ENCODE measurements at regions of chr17 and their contacts with region 1.

Region 1: GRCh38 chr17:75515496-75516254 is at the start of gene CASKIN2:
- DNase-seq: peak; percentile 67 to 86 (median 79)
- ATAC-seq: peak; percentile 53 to 55
- H3K4me3 Mint-ChIP-seq: peak within 1 kb of the TSS; percentile 70 to 90 (median 78)
- H3K27ac Mint-ChIP-seq: peak within 1 kb of the TSS in 8 of 10 donors; percentile 8 to 80 (median 44)
- H3K4me1 Mint-ChIP-seq: peaks cover 13 to 30% (median 26%) of the 10 kb centered on the region in 4 donors
- H3K27me3 Mint-ChIP-seq: no peaks in the 10 kb centered on the region
- polyA plus RNA-seq, gene CASKIN2: 0.05 to 0.62 (median 0.61) TPM

Region 2: DNA sequence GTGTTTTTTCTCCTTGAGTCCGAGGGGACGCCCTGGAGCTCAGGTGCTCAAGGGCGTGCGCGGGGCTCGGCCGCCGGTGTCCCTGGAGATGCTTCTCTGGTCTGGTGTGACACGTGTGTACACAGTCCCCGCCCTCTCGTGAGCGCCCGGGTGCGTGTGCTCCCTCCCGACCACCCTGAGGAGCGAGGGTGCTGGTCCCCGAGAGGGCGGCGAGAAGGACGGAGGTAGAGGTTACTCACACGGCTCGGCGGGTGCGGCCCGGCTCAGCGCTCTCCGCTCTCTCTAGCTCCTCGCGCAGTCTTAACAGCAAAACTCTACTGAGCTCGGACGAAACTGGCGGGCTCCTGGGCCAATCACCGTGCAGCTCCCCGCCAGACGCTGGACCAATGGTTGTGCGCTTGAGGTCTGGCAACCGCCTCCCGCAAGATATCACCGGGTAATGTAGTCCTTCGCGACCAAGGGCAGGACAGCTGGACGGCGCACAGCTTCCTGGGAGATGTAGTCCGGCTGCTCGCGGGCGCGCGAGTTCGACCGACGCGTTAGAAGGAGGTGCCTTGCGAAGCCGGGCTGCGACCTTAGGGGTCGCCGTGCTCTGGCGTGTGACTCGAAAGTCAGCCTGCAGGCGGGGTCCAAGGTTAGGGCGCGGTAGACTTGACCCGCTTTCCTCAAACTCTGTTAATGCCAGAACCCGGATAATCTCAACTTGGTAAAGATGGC is 226.4 kb before region 1 on chr17 and contains the start of gene SLC25A19:
- POLR2A ChIA-PET with region 1: interaction called, 13 read pairs
- DNase-seq: peak; percentile 86 to 99 (median 96)
- ATAC-seq: peak; percentile 90 to 92
- H3K4me3 Mint-ChIP-seq: peak within 1 kb of the TSS; percentile 95 to 100 (median 100)
- H3K27ac Mint-ChIP-seq: peak within 1 kb of the TSS; percentile 98 to 100 (median 100)
- H3K4me1 Mint-ChIP-seq: peaks cover 10 to 24% (median 19%) of the 10 kb centered on the region in 4 donors
- H3K27me3 Mint-ChIP-seq: no peaks in the 10 kb centered on the region
- polyA plus RNA-seq, gene SLC25A19: 11.2 to 15.4 (median 13.3) TPM

Region 3: DNA sequence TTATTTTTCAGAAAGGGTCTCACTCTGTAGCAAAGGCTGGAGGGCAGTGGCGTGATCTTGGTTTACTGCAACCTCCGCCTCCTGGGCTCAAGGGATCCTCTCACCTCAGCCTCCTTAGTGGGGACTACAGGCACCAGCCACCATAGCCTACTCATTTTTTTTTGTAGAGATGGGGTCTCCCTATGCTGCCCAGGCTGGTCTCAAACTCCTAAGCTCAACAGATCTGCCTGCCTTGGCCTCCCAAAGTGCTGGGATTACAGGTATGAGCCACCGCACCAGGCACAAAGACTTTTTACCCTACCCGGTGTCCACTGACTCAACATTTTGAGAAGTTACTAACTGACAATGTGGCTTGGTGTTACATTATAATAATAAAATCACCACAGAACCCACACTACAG is 117.4 kb before region 1 on chr17:
- POLR2A ChIA-PET with region 1: no interaction called
- DNase-seq: no peak
- ATAC-seq: no peak
- H3K4me3 Mint-ChIP-seq: peak overlapping the region in 1 of 10 donors; percentile 33
- H3K27ac Mint-ChIP-seq: peak overlapping the region in 5 of 10 donors; percentile 22 to 66 (median 37)
- H3K4me1 Mint-ChIP-seq: peaks cover 24 to 89% (median 84%) of the 10 kb centered on the region in 4 donors
- H3K27me3 Mint-ChIP-seq: no peaks in the 10 kb centered on the region

Region 4: DNA sequence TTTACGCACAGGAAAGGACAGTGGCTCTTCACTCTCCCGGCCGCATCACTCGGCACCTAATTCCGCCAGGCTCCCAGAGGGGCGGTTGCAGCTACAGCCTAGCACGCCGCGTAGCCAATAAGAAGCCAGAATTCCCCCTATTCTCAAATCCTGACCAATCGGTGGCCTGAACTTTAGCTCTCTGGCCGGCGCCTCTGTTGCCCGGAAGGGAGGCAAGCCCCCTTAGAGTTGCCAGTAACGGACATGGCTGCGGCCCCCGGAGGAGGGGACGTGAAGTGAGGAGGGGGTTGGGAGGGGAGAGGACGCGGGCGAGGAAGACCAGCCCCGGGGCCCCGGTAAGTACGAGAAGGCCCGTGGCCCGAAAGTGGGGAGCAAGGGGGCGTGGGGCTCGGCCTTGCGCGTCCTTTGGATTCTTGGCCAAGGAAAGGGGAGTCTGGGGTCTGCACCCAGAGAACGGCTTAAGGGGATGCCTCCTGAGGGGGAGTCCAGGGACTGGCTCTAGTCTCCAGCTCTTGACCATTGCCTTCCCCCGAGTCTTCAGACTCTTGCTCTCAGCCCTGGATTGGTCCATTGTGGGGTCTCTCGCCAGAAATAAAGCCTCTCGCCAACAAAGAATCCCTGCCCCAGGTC is 59.1 kb before region 1 on chr17 and contains the start of gene TMEM94:
- POLR2A ChIA-PET with region 1: interaction called, 19 read pairs
- DNase-seq: peak; percentile 75 to 97 (median 90)
- ATAC-seq: peak; percentile 94 to 98
- H3K4me3 Mint-ChIP-seq: peak within 1 kb of the TSS; percentile 88 to 96 (median 94)
- H3K27ac Mint-ChIP-seq: peak within 1 kb of the TSS; percentile 84 to 98 (median 95)
- H3K4me1 Mint-ChIP-seq: peaks cover 11 to 54% (median 36%) of the 10 kb centered on the region in 4 donors
- H3K27me3 Mint-ChIP-seq: no peaks in the 10 kb centered on the region
- polyA plus RNA-seq, gene TMEM94: 8.4 to 23.5 (median 11.5) TPM

Region 5: DNA sequence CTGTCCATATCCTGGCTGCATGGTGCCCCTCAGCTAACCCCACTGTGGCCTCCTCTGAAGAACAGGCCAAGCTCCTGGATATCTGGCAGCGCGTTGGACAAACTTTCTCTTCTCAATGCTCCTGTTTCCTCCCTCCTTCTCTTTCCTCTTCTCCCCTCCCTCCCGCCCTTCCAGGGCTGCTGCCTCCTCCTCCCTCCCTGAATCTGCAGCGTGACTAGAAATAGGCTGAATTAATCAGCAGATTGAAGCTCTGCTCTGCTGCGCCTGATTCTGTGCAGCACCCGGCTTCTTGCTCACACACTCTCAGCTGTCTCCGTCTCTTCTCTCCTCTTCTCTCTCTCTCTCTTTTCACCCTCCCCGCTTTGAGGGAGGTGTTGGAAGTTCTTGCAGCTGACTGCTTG is 39.4 kb before region 1 on chr17:
- POLR2A ChIA-PET with region 1: no interaction called
- DNase-seq: no peak
- ATAC-seq: no peak
- H3K4me3 Mint-ChIP-seq: no peak overlapping the region
- H3K27ac Mint-ChIP-seq: peak overlapping the region in 2 of 10 donors; percentile 31 to 72
- H3K4me1 Mint-ChIP-seq: peaks cover 2 to 12% (median 6%) of the 10 kb centered on the region in 4 donors
- H3K27me3 Mint-ChIP-seq: no peaks in the 10 kb centered on the region

Region 6: GRCh38 chr17:75487351-75488070 is 28.2 kb before region 1 on chr17:
- POLR2A ChIA-PET with region 1: interaction called, 13 read pairs
- DNase-seq: peak; percentile 27 to 75 (median 57)
- ATAC-seq: peak; percentile 95 to 96
- H3K4me3 Mint-ChIP-seq: peak overlapping the region; percentile 68 to 93 (median 81)
- H3K27ac Mint-ChIP-seq: peak overlapping the region; percentile 97 to 99 (median 98)
- H3K4me1 Mint-ChIP-seq: peaks cover 20 to 42% (median 34%) of the 10 kb centered on the region in 4 donors
- H3K27me3 Mint-ChIP-seq: no peaks in the 10 kb centered on the region

Region 7: GRCh38 chr17:75535119-75535537 is 19.5 kb after region 1 on chr17:
- POLR2A ChIA-PET with region 1: interaction called, 18 read pairs
- DNase-seq: peak in 8 of 10 donors; percentile 15 to 70 (median 48)
- ATAC-seq: peak; percentile 94 to 95
- H3K4me3 Mint-ChIP-seq: peak overlapping the region; percentile 34 to 81 (median 75)
- H3K27ac Mint-ChIP-seq: peak overlapping the region; percentile 49 to 95 (median 91)
- H3K4me1 Mint-ChIP-seq: peaks cover 7 to 28% (median 18%) of the 10 kb centered on the region in 4 donors
- H3K27me3 Mint-ChIP-seq: no peaks in the 10 kb centered on the region

Region 8: GRCh38 chr17:75576661-75577060 is 61.0 kb after region 1 on chr17:
- POLR2A ChIA-PET with region 1: interaction called, 15 read pairs
- DNase-seq: no peak
- ATAC-seq: no peak
- H3K4me3 Mint-ChIP-seq: no peak overlapping the region
- H3K27ac Mint-ChIP-seq: no peak overlapping the region
- H3K4me1 Mint-ChIP-seq: peaks cover 5 to 8% (median 8%) of the 10 kb centered on the region in 4 donors
- H3K27me3 Mint-ChIP-seq: no peaks in the 10 kb centered on the region

Region 9: GRCh38 chr17:75589012-75589918 is 73.6 kb after region 1 on chr17:
- POLR2A ChIA-PET with region 1: interaction called, 20 read pairs
- DNase-seq: peak; percentile 89 to 98 (median 94)
- ATAC-seq: peak; percentile 78 to 83
- H3K4me3 Mint-ChIP-seq: peak overlapping the region; percentile 67 to 95 (median 81)
- H3K27ac Mint-ChIP-seq: peak overlapping the region in 8 of 10 donors; percentile 55 to 96 (median 88)
- H3K4me1 Mint-ChIP-seq: peaks cover 3 to 20% (median 11%) of the 10 kb centered on the region in 4 donors
- H3K27me3 Mint-ChIP-seq: no peaks in the 10 kb centered on the region

Region 10: DNA sequence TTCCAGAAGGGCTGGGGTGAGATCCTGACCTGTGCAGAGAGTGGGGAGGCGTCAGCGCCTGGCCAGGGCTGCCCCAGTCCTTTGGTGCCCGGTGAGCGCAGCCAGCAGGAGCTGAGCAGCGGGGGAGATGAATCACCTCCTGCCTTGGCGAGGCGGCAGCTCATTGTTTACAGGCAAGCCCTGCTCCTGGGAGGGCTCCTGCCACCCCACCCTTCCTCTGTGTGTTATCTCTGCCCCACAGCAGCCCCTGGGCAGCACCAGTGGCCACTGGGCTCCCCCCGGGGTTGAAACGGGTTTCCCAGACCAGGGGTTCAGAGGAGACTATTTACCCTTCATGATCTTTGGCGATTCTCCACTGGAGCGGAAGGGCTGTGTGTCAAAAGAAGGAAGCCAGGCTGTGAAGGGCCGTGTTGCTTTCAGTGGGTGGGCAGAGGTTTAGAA is 191.5 kb after region 1 on chr17:
- POLR2A ChIA-PET with region 1: no interaction called
- DNase-seq: no peak
- ATAC-seq: peak in 1 of 2 donors; percentile 29
- H3K4me3 Mint-ChIP-seq: no peak overlapping the region
- H3K27ac Mint-ChIP-seq: peak overlapping the region in 2 of 10 donors; percentile 33 to 47
- H3K4me1 Mint-ChIP-seq: peaks cover 0 to 3% (median 0%) of the 10 kb centered on the region in 4 donors
- H3K27me3 Mint-ChIP-seq: no peaks in the 10 kb centered on the region